Panc1 (cell line): ENCODE measurements at regions of chr3 and their contacts with region 1.

Region 1: GRCh38 chr3:185129083-185129482 is 23.8 kb downstream of the C3orf70 start:
- DNase-seq: no peak
- ATAC-seq: no peak
- H3K4me3 ChIP-seq: no peak overlapping the region
- H3K27ac ChIP-seq: no peak overlapping the region
- H3K4me1 ChIP-seq: no peaks in the 10 kb centered on the region
- H3K27me3 ChIP-seq: peaks cover 12% of the 10 kb centered on the region
- CTCF ChIP-seq: no peak

Region 2: GRCh38 chr3:184636741-184637316 is 492.3 kb before region 1 on chr3:
- CTCF ChIA-PET with region 1: no interaction called
- POLR2A ChIA-PET with region 1: no interaction called
- in situ Hi-C with region 1: no loop called
- intact Hi-C with region 1: no loop called
- DNase-seq: no peak
- ATAC-seq: no peak
- H3K4me3 ChIP-seq: no peak overlapping the region
- H3K27ac ChIP-seq: no peak overlapping the region
- H3K4me1 ChIP-seq: no peaks in the 10 kb centered on the region
- H3K27me3 ChIP-seq: no peaks in the 10 kb centered on the region
- CTCF ChIP-seq: no peak

Region 3: DNA sequence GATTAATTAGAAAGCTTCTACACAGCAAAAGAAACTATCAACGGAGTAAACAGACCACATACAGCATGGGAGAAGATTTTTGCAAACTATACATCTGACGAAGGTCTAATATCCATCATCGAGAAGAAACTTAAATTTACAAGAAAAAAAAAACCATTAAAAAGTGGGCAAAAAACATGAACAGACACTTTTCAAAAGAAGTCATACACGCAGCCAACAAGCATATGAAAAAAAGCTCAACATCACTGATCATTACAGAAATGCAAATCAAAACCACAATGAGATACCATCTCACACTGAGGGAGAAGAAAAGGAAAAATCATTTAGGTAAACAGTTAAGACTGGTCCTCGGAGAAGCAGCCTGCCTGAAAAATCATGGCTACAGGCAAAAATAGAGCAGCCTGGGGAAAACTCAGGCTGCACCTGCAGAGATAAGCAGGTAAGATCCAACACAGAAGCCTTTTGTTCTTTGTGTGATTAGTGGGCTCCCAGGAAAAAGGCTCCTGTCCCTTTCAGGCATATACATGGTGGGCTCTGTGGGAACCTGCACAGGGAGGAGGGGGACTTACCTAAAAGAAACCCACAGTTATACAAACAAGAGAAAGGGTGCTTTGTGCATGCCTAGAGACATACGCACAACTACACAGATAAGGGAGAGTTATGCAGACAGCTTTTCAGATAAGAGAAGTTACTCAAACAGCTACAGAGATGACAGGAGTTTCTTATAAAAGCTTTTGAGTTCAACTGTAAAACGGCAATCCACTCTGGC is 25.5 kb before region 1 on chr3:
- CTCF ChIA-PET with region 1: no interaction called
- POLR2A ChIA-PET with region 1: no interaction called
- in situ Hi-C with region 1: no loop called
- intact Hi-C with region 1: loop called (anchors 2 kb)
- DNase-seq: no peak
- ATAC-seq: no peak
- H3K4me3 ChIP-seq: no peak overlapping the region
- H3K27ac ChIP-seq: no peak overlapping the region
- H3K4me1 ChIP-seq: no peaks in the 10 kb centered on the region
- H3K27me3 ChIP-seq: no peaks in the 10 kb centered on the region; the same call in none of the 2 replicates
- CTCF ChIP-seq: no peak

Region 4: GRCh38 chr3:185215873-185216606 is 87.0 kb after region 1 on chr3:
- CTCF ChIA-PET with region 1: no interaction called
- POLR2A ChIA-PET with region 1: no interaction called
- in situ Hi-C with region 1: no loop called
- intact Hi-C with region 1: no loop called
- DNase-seq: peak; percentile 15
- ATAC-seq: no peak
- H3K4me3 ChIP-seq: no peak overlapping the region
- H3K27ac ChIP-seq: no peak overlapping the region
- H3K4me1 ChIP-seq: 0 out of 2 replicates have a peak, but pooled peaks cover 7% of the 10 kb centered on the region
- H3K27me3 ChIP-seq: no peaks in the 10 kb centered on the region
- CTCF ChIP-seq: peak; percentile 65; the same call in 1 of the 2 replicates